WTC11 (cell line): ENCODE measurements at regions of chr20 and their contacts with region 1.

Region 1: GRCh38 chr20:41249406-41250281 is 67.9 kb downstream of the ZHX3 start:
- DNase-seq: peak; percentile 71
- ATAC-seq: peak; percentile 90
- H3K4me3 Mint-ChIP-seq: no peak overlapping the region; the same call in 1 of the 2 replicates
- H3K27ac Mint-ChIP-seq: peak overlapping the region; percentile 80; the same call in 1 of the 2 replicates
- H3K4me1 Mint-ChIP-seq: peaks cover 5% of the 10 kb centered on the region; the same call in 1 of the 2 replicates
- H3K27me3 Mint-ChIP-seq: peaks cover 37% of the 10 kb centered on the region
- CTCF ChIP-seq: peak; percentile 41; the same call in 1 of the 2 replicates

Region 2: GRCh38 chr20:41119546-41120235 is 130.0 kb before region 1 on chr20:
- CTCF ChIA-PET with region 1: no interaction called
- POLR2A ChIA-PET with region 1: no interaction called
- DNase-seq: no peak
- ATAC-seq: no peak
- H3K4me3 Mint-ChIP-seq: no peak overlapping the region
- H3K27ac Mint-ChIP-seq: no peak overlapping the region
- H3K4me1 Mint-ChIP-seq: no peaks in the 10 kb centered on the region
- H3K27me3 Mint-ChIP-seq: no peaks in the 10 kb centered on the region
- CTCF ChIP-seq: no peak

Region 3: DNA sequence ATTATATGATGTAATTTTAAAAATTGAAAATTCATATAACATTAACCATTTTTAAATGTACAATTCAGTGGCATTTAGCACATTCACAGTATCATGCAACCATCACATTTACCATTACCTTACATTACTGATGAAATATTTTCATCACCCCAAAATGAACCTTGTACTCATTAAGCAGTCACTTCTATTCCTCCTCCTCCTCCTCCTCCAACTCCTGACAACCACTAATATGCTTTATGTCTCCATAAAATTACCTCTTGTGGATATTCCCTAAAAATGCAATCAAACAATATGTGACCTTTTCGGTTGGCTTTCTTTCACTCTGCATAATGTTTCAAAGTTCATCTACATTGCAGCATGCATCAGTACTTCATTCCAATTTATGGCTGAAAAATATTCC is 22.7 kb after region 1 on chr20:
- CTCF ChIA-PET with region 1: interaction called, 10 read pairs
- POLR2A ChIA-PET with region 1: no interaction called
- DNase-seq: no peak
- ATAC-seq: no peak
- H3K4me3 Mint-ChIP-seq: no peak overlapping the region
- H3K27ac Mint-ChIP-seq: no peak overlapping the region
- H3K4me1 Mint-ChIP-seq: peaks cover 6% of the 10 kb centered on the region
- H3K27me3 Mint-ChIP-seq: no peaks in the 10 kb centered on the region
- CTCF ChIP-seq: no peak

Region 4: GRCh38 chr20:41453010-41453950 is 203.6 kb after region 1 on chr20:
- CTCF ChIA-PET with region 1: no interaction called
- POLR2A ChIA-PET with region 1: no interaction called
- DNase-seq: no peak
- ATAC-seq: no peak
- H3K4me3 Mint-ChIP-seq: no peak overlapping the region
- H3K27ac Mint-ChIP-seq: no peak overlapping the region
- H3K4me1 Mint-ChIP-seq: no peaks in the 10 kb centered on the region
- H3K27me3 Mint-ChIP-seq: no peaks in the 10 kb centered on the region
- CTCF ChIP-seq: no peak